Psoas muscle (tissue), 8 donors: ENCODE measurements at regions of chr17 and their contacts with region 1.

Region 1: DNA sequence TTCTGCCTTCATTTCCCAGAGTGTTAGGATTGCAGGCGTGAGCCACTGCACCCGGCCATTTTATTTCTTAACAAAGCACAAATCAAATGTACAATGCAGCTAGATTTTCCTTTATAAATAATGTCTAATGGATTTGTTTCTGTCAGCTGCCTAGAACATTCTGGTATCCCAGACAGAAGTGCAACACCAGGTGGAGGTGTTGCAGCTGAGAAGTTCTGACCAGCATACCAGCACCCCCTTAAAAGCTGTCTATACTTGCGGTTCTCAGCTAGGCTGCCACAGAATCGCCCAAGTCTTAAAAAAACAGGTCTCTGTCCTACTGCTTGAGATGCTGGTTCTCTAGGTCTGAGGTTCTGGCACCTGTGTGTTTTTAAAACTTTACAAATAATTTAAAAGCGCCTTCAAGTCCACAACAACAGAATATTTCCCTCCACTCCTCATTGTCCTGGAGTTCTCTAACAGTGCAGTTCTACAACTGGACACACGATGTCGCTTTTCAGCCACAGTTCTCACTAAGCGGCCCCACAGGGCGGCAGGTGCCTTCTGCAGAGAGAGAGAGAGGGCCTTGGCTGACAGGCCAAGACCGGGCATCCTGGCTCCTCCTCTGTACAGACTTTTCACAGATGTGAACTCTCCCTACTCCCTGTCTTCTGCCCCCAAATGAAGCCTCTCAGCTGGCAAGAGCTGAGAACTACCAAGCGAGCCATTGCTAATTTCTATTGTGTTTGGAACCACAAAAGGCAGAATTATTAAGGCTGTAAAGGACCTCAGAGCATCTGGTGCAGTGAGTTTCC is 32.6 kb upstream of the MEOX1 start:
- DNase-seq: peak; percentile 66 to 81
- ATAC-seq: peak; percentile 82 to 94 (median 88)
- H3K4me3 ChIP-seq: no peak overlapping the region
- H3K27ac ChIP-seq: no peak overlapping the region
- H3K4me1 ChIP-seq: peaks cover 17% of the 10 kb centered on the region
- H3K27me3 ChIP-seq: no peaks in the 10 kb centered on the region
- CTCF ChIP-seq: peak; percentile 97

Region 2: DNA sequence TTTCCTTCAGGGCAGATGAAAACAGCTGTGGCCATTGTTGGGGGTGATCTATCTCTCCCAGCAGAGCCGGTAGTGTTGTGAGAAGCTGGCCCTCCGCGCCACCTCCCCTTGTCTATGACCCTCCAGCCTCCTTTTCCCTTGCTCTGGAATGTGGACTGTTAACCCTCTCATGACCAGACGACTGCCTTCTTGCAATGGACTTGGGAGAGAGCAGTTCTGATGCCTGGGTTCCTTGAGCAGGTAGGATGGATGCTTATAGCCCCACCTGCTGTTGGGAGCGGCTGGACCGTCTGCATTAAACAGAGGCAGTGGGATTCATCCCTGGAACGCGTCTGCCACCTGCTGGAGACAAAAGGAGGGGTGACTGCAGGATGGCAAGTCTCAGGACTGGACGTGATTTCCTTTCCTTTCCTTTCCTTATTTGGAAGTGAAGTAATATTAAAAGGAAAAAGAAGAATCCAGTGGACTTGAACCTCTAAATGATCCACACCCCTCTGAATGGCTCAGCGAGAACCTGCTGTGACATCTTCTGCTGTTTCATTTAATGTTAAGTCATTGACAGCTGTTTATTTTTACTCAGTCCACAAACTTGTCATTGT is 66.1 kb after region 1 on chr17:
- intact Hi-C with region 1: loop called (anchors 1 kb)
- DNase-seq: peak; percentile 91 to 94
- ATAC-seq: peak; percentile 92 to 95 (median 94)
- H3K4me3 ChIP-seq: no peak overlapping the region
- H3K27ac ChIP-seq: no peak overlapping the region
- H3K4me1 ChIP-seq: peaks cover 6% of the 10 kb centered on the region
- H3K27me3 ChIP-seq: peaks cover 0 to 27% (median 16%) of the 10 kb centered on the region in 3 donors
- CTCF ChIP-seq: peak; percentile 98

Region 3: DNA sequence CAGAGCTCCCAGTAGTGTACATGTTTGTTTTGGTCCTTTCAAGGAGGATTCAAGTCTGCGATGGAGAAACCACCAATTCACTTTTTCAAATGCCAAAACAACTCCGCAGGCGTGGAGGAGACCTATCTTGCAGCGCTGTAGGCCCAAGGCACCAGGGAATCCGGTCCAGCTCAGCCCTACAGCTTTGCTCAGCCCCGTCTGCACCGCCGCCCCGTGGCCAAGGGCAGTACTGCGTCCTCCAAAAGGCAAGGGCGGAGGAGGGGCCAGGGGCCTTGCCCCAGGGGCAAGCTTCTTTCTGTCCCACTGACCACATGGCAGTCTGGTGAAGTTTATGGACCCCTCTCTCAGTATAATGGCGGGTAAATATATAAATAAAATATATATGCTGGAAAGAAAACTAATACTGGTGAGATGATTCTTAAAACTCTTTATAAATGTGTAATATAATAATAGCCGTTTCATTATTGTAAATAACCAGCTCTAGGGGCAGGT is 152.0 kb after region 1 on chr17:
- intact Hi-C with region 1: loop called (anchors 5 kb)
- DNase-seq: peak; percentile 87 to 92
- ATAC-seq: peak; percentile 94 to 98 (median 96)
- H3K4me3 ChIP-seq: peak overlapping the region; percentile 51
- H3K27ac ChIP-seq: peak overlapping the region; percentile 31
- H3K4me1 ChIP-seq: peaks cover 11% of the 10 kb centered on the region
- H3K27me3 ChIP-seq: no peaks in the 10 kb centered on the region
- CTCF ChIP-seq: peak; percentile 98